ENCODE measurements at regions of chr15 and their contacts with region 1.

Region 1: DNA sequence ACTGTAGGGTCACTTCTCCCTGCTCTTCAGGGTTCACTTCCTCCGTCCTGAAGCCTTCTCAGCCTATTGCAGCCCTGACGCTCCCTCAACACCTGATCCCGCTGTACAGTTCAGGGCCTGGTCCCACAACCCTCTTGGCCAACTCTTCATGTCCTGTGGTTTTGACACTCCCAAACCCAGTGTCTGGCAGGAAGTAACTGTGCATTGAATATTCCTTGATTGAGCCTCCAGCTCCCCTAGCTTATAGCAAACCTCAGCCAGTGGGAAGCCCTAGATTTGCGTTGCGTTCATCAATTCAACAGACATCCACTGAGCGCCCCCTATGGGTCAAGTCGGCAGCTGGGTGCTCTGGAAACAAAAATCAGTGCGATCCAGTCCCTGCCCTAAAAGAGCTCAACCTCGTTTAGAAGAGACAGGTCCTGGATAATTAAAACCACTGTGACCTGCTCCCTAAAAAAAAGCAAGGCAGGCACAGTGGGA is 13.5 kb downstream of the UBAP1L start:
- DNase-seq: peak; percentile 69
- CTCF ChIP-seq: peak; percentile 46

Region 2: GRCh38 chr15:65086017-65086679 is 15.3 kb before region 1 on chr15:
- CTCF ChIA-PET with region 1: interaction called, 11 read pairs
- POLR2A ChIA-PET with region 1: no interaction called
- DNase-seq: peak; percentile 53
- CTCF ChIP-seq: peak; percentile 58